ENCODE measurements at regions of chr11 and their contacts with region 1.

Region 1: GRCh38 chr11:123103326-123103980 is 41.5 kb upstream of the HSPA8 start:
- DNase-seq: peak in 1 of 2 donors; percentile 85
- ATAC-seq: peak; percentile 82 to 93 (median 88)
- H3K4me3 ChIP-seq: no peak overlapping the region
- H3K27ac ChIP-seq: peak overlapping the region in 7 of 10 donors; percentile 31 to 75 (median 64)
- H3K4me1 ChIP-seq: peaks cover 8 to 46% (median 23%) of the 10 kb centered on the region in 9 donors
- H3K27me3 ChIP-seq: peaks cover 0 to 3% (median 0%) of the 10 kb centered on the region in 7 donors
- CTCF ChIP-seq: peak; percentile 56 to 83 (median 65)

Region 2: GRCh38 chr11:123062158-123062891 is 41.1 kb before region 1 on chr11:
- intact Hi-C with region 1: loop called in 4 of 10 experiments (anchors 2 to 5 kb)
- DNase-seq: peak; percentile 98 to 99
- ATAC-seq: peak; percentile 92 to 96 (median 93)
- H3K4me3 ChIP-seq: peak overlapping the region; percentile 67 to 96 (median 88)
- H3K27ac ChIP-seq: peak overlapping the region; percentile 99 to 100 (median 100)
- H3K4me1 ChIP-seq: peaks cover 14 to 70% (median 54%) of the 10 kb centered on the region in 9 donors
- H3K27me3 ChIP-seq: no peaks in the 10 kb centered on the region
- CTCF ChIP-seq: peak in 1 of 9 donors; percentile 9

Region 3: GRCh38 chr11:123246749-123247495 is 143.5 kb after region 1 on chr11:
- intact Hi-C with region 1: loop called in 5 of 10 experiments (anchors 2 to 5 kb)
- DNase-seq: peak; percentile 78 to 79
- ATAC-seq: peak; percentile 68 to 86 (median 80)
- H3K4me3 ChIP-seq: peak overlapping the region in 1 of 10 donors; percentile 5
- H3K27ac ChIP-seq: no peak overlapping the region
- H3K4me1 ChIP-seq: peaks cover 0 to 13% (median 4%) of the 10 kb centered on the region in 9 donors
- H3K27me3 ChIP-seq: peaks cover 0 to 14% (median 6%) of the 10 kb centered on the region in 7 donors
- CTCF ChIP-seq: peak; percentile 96 to 99 (median 98)